CD4-positive, alpha-beta memory T cell (primary cell): ENCODE measurements at regions of chr22 and their contacts with region 1.

Region 1: GRCh38 chr22:37199103-37199759 is 11.2 kb upstream of the C1QTNF6 start:
- DNase-seq: peak; percentile 97 to 100 (median 99)
- H3K4me3 ChIP-seq: peak overlapping the region; percentile 57 to 73
- H3K4me3 Mint-ChIP-seq: peak overlapping the region; percentile 79 to 91 (median 84)
- H3K27ac ChIP-seq: peak overlapping the region; percentile 93
- H3K27ac Mint-ChIP-seq: peak overlapping the region; percentile 89 to 96 (median 93)
- H3K4me1 ChIP-seq: peaks cover 39% of the 10 kb centered on the region
- H3K4me1 Mint-ChIP-seq: peaks cover 10 to 40% (median 22%) of the 10 kb centered on the region in 4 donors
- H3K27me3 ChIP-seq: no peaks in the 10 kb centered on the region
- H3K27me3 Mint-ChIP-seq: no peaks in the 10 kb centered on the region

Region 2: DNA sequence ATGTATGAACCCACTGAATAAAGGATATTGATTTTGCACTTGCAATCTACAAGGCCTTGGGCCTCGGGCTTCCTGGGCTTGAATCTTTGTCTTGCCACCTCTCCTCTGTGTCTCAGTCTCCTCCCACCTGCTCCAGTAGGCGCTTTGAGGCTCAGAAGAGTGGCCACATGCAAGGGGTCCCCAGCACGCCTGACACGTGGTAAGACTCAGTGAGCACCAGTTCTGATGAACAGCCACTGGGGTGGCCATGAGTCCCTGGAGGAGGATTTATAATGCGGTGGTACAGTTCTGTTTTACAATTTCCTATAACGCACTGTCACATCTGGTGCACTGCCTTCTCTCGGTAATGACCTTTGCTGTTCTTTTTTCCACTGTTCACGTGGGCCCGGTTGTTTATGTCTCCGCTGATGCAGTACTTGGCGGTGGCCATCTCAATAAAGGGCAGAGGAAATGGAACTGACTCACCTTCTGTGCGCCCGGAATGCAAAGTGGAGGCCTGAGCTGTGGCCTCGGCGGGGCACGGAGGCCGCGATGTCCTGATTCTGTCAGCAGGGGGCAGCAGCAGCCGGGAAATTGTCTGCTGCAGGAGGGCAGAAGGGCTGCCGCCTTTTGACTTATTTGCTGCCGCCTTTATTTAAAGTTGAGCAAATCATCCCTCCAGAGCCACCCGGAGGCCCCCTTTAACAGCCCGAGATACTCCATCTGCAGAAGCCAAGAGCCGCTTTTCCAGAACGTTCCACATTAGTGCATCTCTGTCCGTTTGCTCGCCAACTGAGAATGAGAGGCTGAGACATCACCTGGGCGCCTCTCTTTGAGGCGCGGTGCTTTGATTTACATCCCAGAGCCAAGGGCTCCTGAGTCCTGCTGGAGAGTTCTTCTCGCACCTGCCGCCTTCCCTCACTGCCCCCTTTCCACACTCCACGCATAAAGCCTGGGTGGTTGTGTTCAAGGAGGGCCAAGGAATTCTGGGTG is 417.3 kb before region 1 on chr22:
- CTCF ChIA-PET with region 1: interaction called, 3 read pairs
- POLR2A ChIA-PET with region 1: interaction called, 5 read pairs
- intact Hi-C with region 1: loop called (anchors 1 kb)
- DNase-seq: peak; percentile 80 to 86 (median 82)
- H3K4me3 ChIP-seq: no peak overlapping the region
- H3K4me3 Mint-ChIP-seq: peak overlapping the region in 2 of 8 donors; percentile 46 to 75
- H3K27ac ChIP-seq: no peak overlapping the region
- H3K27ac Mint-ChIP-seq: peak overlapping the region; percentile 14 to 86 (median 67)
- H3K4me1 ChIP-seq: peaks cover 12% of the 10 kb centered on the region
- H3K4me1 Mint-ChIP-seq: peaks cover 6 to 24% (median 17%) of the 10 kb centered on the region in 4 donors
- H3K27me3 ChIP-seq: peaks cover 5% of the 10 kb centered on the region
- H3K27me3 Mint-ChIP-seq: peaks cover 3 to 4% of the 10 kb centered on the region in 2 donors

Region 3: GRCh38 chr22:36913427-36914389 is 285.5 kb before region 1 on chr22 and contains the start of gene CSF2RB:
- CTCF ChIA-PET with region 1: no interaction called
- POLR2A ChIA-PET with region 1: no interaction called
- intact Hi-C with region 1: no loop called
- DNase-seq: no peak
- H3K4me3 ChIP-seq: no peak within 1 kb of the TSS
- H3K4me3 Mint-ChIP-seq: peak within 1 kb of the TSS in 1 of 8 donors; percentile 42
- H3K27ac ChIP-seq: no peak within 1 kb of the TSS
- H3K27ac Mint-ChIP-seq: peak within 1 kb of the TSS in 1 of 7 donors; percentile 24
- H3K4me1 ChIP-seq: no peaks in the 10 kb centered on the region
- H3K4me1 Mint-ChIP-seq: peaks cover 0 to 4% (median 0%) of the 10 kb centered on the region in 4 donors
- H3K27me3 ChIP-seq: no peaks in the 10 kb centered on the region
- H3K27me3 Mint-ChIP-seq: peaks cover 5 to 16% of the 10 kb centered on the region in 2 donors
- total RNA-seq, gene CSF2RB: 1.2 TPM

Region 4: DNA sequence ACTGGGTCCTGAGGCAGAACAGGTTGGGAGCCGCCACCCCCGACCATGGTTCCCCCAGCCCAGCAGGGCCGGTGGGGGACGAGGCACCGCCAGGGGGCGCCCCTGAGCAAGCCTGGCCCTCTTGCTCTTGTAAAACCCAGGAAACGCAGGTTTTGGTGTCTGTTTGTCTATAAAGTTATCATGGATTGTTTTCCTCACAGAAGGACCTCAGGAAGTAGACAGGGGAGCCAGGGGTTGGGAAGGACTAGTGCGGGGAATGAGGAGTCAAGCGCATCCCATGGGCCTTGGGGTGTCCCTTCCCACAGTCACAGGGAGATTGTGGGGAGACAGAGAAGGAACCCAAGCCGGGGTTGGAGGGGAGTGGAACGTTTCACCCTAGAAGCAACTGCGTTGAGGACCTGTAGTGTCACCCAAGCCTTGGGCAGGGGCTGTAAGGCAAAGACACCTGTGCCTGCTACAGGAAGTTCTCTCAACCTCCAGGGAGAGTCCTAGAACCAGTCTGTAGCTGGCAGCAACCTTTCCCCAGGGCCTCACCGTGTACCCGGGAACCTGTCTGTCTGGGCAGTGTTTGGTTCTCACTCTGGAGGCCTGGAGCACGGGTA is 121.2 kb before region 1 on chr22:
- CTCF ChIA-PET with region 1: interaction called, 61 read pairs
- POLR2A ChIA-PET with region 1: interaction called, 33 read pairs
- intact Hi-C with region 1: loop called (anchors 1 kb)
- DNase-seq: peak; percentile 76 to 85 (median 81)
- H3K4me3 ChIP-seq: no peak overlapping the region
- H3K4me3 Mint-ChIP-seq: peak overlapping the region in 7 of 8 donors; percentile 2 to 73 (median 58)
- H3K27ac ChIP-seq: peak overlapping the region; percentile 44
- H3K27ac Mint-ChIP-seq: peak overlapping the region; percentile 93 to 100 (median 99)
- H3K4me1 ChIP-seq: peaks cover 34% of the 10 kb centered on the region
- H3K4me1 Mint-ChIP-seq: peaks cover 26 to 52% (median 39%) of the 10 kb centered on the region in 4 donors
- H3K27me3 ChIP-seq: no peaks in the 10 kb centered on the region
- H3K27me3 Mint-ChIP-seq: peaks cover 4 to 5% of the 10 kb centered on the region in 2 donors

Region 5: DNA sequence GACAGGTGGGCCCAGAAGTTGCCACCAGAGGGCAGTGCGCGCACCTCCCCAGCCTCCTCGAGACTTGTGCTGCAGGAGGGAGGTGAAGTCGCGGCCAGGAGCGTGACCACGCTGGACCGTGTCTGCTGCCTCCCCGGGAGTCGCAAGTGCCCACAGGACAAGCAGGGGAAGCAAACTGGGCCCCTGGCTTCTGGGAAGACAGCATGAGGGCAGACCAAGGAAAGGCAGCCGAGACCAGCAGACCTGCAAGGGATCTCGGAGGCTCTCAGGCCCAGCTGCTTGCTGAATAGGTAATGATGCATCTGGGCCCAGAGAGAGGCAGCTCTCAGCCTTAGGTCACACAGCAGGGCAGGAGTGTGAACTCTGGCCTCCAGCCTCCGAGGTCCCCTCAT is 32.6 kb before region 1 on chr22:
- CTCF ChIA-PET with region 1: interaction called, 108 read pairs
- POLR2A ChIA-PET with region 1: interaction called, 96 read pairs
- intact Hi-C with region 1: loop called (anchors 1 kb)
- DNase-seq: peak; percentile 73 to 82 (median 78)
- H3K4me3 ChIP-seq: peak overlapping the region; percentile 15 to 18
- H3K4me3 Mint-ChIP-seq: peak overlapping the region; percentile 75 to 90 (median 86)
- H3K27ac ChIP-seq: peak overlapping the region; percentile 37
- H3K27ac Mint-ChIP-seq: peak overlapping the region; percentile 85 to 98 (median 93)
- H3K4me1 ChIP-seq: peaks cover 90% of the 10 kb centered on the region
- H3K4me1 Mint-ChIP-seq: peaks cover 63 to 95% (median 78%) of the 10 kb centered on the region in 4 donors
- H3K27me3 ChIP-seq: no peaks in the 10 kb centered on the region
- H3K27me3 Mint-ChIP-seq: no peaks in the 10 kb centered on the region

Region 6: GRCh38 chr22:37218771-37219411 is 19.7 kb after region 1 on chr22:
- CTCF ChIA-PET with region 1: interaction called, 62 read pairs
- POLR2A ChIA-PET with region 1: interaction called, 125 read pairs
- intact Hi-C with region 1: loop called (anchors 1 kb)
- DNase-seq: peak; percentile 86 to 96 (median 91)
- H3K4me3 ChIP-seq: peak overlapping the region; percentile 15 to 51
- H3K4me3 Mint-ChIP-seq: peak overlapping the region; percentile 67 to 90 (median 84)
- H3K27ac ChIP-seq: peak overlapping the region; percentile 58
- H3K27ac Mint-ChIP-seq: peak overlapping the region; percentile 87 to 98 (median 95)
- H3K4me1 ChIP-seq: peaks cover 73% of the 10 kb centered on the region
- H3K4me1 Mint-ChIP-seq: peaks cover 58 to 79% (median 64%) of the 10 kb centered on the region in 4 donors
- H3K27me3 ChIP-seq: no peaks in the 10 kb centered on the region
- H3K27me3 Mint-ChIP-seq: no peaks in the 10 kb centered on the region

Region 7: GRCh38 chr22:37328017-37328416 is 128.8 kb after region 1 on chr22:
- CTCF ChIA-PET with region 1: no interaction called
- POLR2A ChIA-PET with region 1: no interaction called
- intact Hi-C with region 1: no loop called
- DNase-seq: no peak
- H3K4me3 ChIP-seq: no peak overlapping the region
- H3K4me3 Mint-ChIP-seq: no peak overlapping the region
- H3K27ac ChIP-seq: no peak overlapping the region
- H3K27ac Mint-ChIP-seq: no peak overlapping the region
- H3K4me1 ChIP-seq: no peaks in the 10 kb centered on the region
- H3K4me1 Mint-ChIP-seq: peaks cover 0 to 5% (median under 1%) of the 10 kb centered on the region in 4 donors
- H3K27me3 ChIP-seq: peaks cover 12% of the 10 kb centered on the region
- H3K27me3 Mint-ChIP-seq: peaks cover 34 to 48% of the 10 kb centered on the region in 2 donors

Region 8: DNA sequence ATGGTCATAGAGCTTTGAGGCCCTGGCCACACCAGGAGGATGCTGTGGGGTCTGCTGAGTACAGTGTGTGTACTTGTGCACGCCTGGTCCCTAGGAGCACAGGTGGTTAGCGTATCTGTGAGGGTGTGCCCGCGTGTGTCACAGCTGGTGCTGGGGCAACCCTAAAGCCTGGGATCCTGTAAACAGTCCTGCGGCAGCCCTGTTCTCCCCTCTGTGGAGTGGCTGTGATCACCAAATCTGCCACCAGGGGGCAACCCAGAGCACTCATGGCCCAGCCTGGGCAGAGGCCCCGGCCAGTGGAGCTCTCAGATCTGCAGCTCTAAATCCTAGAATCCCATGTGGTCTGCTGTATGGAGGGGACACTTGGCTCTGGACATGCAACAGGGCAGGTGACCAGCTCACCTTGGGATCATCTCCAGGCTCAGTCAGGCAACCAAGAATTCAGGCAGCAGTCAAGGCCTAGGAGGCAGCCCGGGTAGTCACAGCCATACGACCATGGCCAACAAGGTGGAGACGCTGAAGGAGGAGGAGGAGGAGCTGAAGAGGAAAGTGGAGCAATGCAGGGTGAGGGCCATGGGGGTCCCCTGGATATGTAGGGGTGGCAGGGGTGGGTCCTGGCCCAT is 444.1 kb after region 1 on chr22:
- CTCF ChIA-PET with region 1: no interaction called
- POLR2A ChIA-PET with region 1: no interaction called
- intact Hi-C with region 1: no loop called
- DNase-seq: peak; percentile 75 to 84 (median 80)
- H3K4me3 ChIP-seq: no peak overlapping the region
- H3K4me3 Mint-ChIP-seq: peak overlapping the region; percentile 15 to 82 (median 58)
- H3K27ac ChIP-seq: peak overlapping the region; percentile 45
- H3K27ac Mint-ChIP-seq: peak overlapping the region; percentile 68 to 91 (median 88)
- H3K4me1 ChIP-seq: peaks cover 44% of the 10 kb centered on the region
- H3K4me1 Mint-ChIP-seq: peaks cover 16 to 49% (median 32%) of the 10 kb centered on the region in 4 donors
- H3K27me3 ChIP-seq: no peaks in the 10 kb centered on the region
- H3K27me3 Mint-ChIP-seq: no peaks in the 10 kb centered on the region